ENCODE measurements at regions of chr11 and their contacts with region 1.

Region 1: GRCh38 chr11:61816736-61817455 is at the start of gene FADS1:
- DNase-seq: peak; percentile 97 to 98 (median 98)
- H3K4me3 ChIP-seq: peak within 1 kb of the TSS; percentile 79 to 97 (median 93)
- H3K27ac ChIP-seq: peak within 1 kb of the TSS; percentile 61 to 91
- H3K4me1 ChIP-seq: peaks cover 3 to 31% (median 25%) of the 10 kb centered on the region in 4 experiments
- H3K27me3 ChIP-seq: no peaks in the 10 kb centered on the region

Region 2: DNA sequence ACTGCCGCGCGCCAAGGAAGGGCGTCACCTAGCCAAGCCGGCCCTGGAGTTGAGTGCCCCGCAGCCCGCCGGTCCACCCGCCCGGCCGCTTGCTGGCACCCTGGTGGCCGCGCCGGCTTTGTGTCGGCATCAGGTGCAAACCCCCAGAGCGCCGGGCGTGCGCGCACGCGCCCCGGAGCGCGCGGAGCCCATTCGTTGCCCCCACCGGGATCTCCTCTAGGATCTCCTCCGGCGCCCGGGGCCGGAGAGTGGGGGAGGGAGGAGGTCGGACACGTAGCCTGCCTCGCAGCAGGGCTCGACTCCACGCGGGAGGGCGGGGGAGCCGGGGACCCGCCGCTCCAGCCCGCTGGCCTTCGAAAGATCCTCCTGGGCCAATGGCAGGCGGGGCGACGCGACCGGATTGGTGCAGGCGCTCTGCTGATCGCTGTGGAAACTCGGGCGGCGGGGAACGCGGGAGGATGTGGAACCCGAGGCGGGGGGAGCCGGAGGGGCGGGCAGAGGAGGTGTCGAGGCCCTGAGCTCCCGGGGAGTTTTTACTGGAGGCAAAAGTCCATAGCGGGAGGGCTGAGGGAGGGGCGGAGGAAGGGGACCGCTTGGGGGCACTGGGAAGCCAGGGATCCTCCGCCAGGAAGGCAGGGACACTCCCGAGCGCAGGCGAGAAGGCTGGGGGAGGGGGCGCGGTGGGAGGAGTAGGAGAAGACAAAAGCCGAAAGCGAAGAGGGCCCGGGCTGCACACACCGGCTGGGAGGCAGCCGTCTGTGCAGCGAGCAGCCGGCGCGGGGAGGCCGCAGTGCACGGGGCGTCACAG is 10.9 kb after region 1 on chr11 and contains the start of gene FADS2:
- CTCF ChIA-PET with region 1: interaction called, 50 read pairs
- POLR2A ChIA-PET with region 1: interaction called, 40 read pairs
- DNase-seq: peak; percentile 81 to 92 (median 89)
- H3K4me3 ChIP-seq: peak within 1 kb of the TSS; percentile 53 to 97 (median 84)
- H3K27ac ChIP-seq: peak within 1 kb of the TSS; percentile 64 to 79
- H3K4me1 ChIP-seq: peaks cover 24 to 61% (median 54%) of the 10 kb centered on the region in 4 experiments
- H3K27me3 ChIP-seq: no peaks in the 10 kb centered on the region

Region 3: GRCh38 chr11:61834278-61835048 is 17.6 kb after region 1 on chr11:
- CTCF ChIA-PET with region 1: interaction called, 50 read pairs
- POLR2A ChIA-PET with region 1: interaction called, 40 read pairs
- DNase-seq: peak; percentile 96 to 99 (median 98)
- H3K4me3 ChIP-seq: peak overlapping the region in 4 of 7 experiments; percentile 17 to 97 (median 46)
- H3K27ac ChIP-seq: peak overlapping the region; percentile 81 to 93
- H3K4me1 ChIP-seq: peaks cover 19 to 74% (median 68%) of the 10 kb centered on the region in 4 experiments
- H3K27me3 ChIP-seq: no peaks in the 10 kb centered on the region

Region 4: DNA sequence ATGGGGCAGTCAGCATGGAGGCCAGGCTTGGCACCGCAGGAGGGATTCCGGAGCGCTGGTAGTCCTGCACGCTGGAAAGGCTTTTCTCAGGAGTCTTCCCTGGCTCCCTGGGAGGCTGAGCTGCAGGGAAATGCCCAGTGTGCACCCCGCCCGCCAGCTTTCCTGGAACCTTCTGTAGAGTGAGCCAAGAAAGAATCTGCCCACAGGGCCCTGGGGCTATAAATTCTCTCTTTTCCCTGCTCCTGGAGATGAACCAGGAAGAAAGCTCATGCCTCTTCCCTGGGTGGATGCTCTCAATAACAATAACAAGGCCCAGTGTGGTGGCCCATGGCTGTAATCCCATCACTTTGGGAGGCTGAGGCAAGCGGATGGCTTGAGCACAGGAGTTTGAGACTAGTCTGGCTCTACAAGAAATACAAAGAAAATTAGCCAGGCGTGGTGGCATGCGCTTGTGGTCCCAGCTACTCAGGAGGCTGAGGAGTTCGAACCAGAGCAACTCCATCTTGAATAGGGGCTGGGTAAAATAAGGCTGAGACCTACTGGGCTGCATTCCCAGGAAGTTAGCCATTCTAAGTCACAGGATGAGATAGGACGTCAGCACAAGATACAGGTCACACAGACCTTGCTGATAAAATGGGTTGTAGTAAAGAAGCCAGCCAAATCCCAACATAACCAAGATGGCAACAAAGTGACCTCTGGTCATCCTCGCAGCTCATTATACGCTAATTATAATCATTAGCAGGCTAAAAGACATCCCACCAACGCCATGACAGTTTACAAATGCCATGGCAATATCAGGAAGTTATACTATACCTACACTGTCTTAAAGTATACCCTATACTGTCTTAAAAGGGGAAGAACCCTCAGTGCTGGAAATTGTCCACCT is 196.9 kb after region 1 on chr11:
- CTCF ChIA-PET with region 1: no interaction called
- POLR2A ChIA-PET with region 1: no interaction called
- DNase-seq: no peak
- H3K4me3 ChIP-seq: no peak overlapping the region
- H3K27ac ChIP-seq: no peak overlapping the region
- H3K4me1 ChIP-seq: peaks cover 0 to 4% (median 0%) of the 10 kb centered on the region in 4 experiments
- H3K27me3 ChIP-seq: no peaks in the 10 kb centered on the region